ENCODE measurements at regions of chr1 and their contacts with region 1.

Region 1: GRCh38 chr1:27392096-27392777 is at the start of gene GPR3:
- DNase-seq: peak; percentile 91 to 94 (median 93)
- ATAC-seq: peak; percentile 95
- H3K4me3 ChIP-seq: no peak within 1 kb of the TSS
- H3K4me1 ChIP-seq: peaks cover 15% of the 10 kb centered on the region
- CTCF ChIP-seq: no peak
- total RNA-seq, gene GPR3: 0.14 TPM in 1 of 3 donors, not detected in the others

Region 2: GRCh38 chr1:27037515-27037914 is 354.7 kb before region 1 on chr1:
- intact Hi-C with region 1: no loop called
- DNase-seq: no peak
- ATAC-seq: no peak
- H3K4me3 ChIP-seq: no peak overlapping the region
- H3K4me1 ChIP-seq: peaks cover 14% of the 10 kb centered on the region
- CTCF ChIP-seq: no peak

Region 3: GRCh38 chr1:27300341-27301051 is 91.7 kb before region 1 on chr1:
- intact Hi-C with region 1: loop called (anchors 5 kb)
- DNase-seq: peak; percentile 82 to 89 (median 84)
- ATAC-seq: peak; percentile 93
- H3K4me3 ChIP-seq: no peak overlapping the region
- H3K4me1 ChIP-seq: peaks cover 3% of the 10 kb centered on the region
- CTCF ChIP-seq: peak; percentile 99

Region 4: GRCh38 chr1:27357281-27358037 is 34.8 kb before region 1 on chr1:
- intact Hi-C with region 1: loop called in 1 of 2 experiments (anchors 5 kb)
- DNase-seq: peak; percentile 79 to 88 (median 86)
- ATAC-seq: peak; percentile 92
- H3K4me3 ChIP-seq: no peak overlapping the region
- H3K4me1 ChIP-seq: peaks cover 9% of the 10 kb centered on the region
- CTCF ChIP-seq: peak; percentile 98

Measured in mucosa of descending colon (tissue), 3 donors.